Cardiac septum (tissue), 1 donor: ENCODE measurements at regions of chr3 and their contacts with region 1.

Region 1: DNA sequence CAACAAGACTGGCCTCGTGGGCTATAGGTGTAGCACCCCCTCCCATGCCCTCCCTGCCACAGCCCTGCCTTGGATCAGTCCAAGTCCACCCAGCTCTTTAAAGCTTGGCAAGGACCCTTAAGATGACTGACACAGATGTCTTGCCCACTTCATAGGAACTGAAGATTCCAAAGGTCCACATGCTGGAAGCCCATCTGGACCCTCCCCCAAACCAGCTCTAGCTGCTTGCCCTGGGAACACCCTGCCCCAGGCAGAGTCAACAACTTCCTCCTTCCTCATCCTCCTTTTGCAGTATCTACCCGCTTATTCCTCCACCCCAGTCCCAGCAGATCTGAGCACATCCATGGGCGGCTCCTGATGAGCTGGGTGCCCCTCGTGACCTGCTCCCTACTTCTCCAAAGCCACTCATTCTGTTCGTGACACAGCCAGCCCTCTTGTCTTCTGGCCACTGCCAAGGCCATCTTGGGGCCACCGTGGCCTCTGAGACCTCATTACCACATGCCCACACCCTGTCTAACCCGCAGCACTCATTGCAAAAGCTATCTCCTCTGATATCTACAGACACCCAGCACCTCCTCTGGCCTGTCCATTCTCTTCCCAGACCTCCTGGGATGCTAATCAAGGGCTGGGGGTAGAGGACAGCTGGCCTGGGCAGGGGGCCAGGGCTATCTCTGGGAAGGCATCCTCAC is 2.0 kb upstream of the PFKFB4 start:
- DNase-seq: no peak

Region 2: GRCh38 chr3:48232734-48233133 is 325.9 kb before region 1 on chr3:
- intact Hi-C with region 1: no loop called
- DNase-seq: no peak

Region 3: GRCh38 chr3:48601622-48601994 is 43.0 kb after region 1 on chr3:
- intact Hi-C with region 1: loop called (anchors 2 kb)
- DNase-seq: peak; percentile 86

Region 4: DNA sequence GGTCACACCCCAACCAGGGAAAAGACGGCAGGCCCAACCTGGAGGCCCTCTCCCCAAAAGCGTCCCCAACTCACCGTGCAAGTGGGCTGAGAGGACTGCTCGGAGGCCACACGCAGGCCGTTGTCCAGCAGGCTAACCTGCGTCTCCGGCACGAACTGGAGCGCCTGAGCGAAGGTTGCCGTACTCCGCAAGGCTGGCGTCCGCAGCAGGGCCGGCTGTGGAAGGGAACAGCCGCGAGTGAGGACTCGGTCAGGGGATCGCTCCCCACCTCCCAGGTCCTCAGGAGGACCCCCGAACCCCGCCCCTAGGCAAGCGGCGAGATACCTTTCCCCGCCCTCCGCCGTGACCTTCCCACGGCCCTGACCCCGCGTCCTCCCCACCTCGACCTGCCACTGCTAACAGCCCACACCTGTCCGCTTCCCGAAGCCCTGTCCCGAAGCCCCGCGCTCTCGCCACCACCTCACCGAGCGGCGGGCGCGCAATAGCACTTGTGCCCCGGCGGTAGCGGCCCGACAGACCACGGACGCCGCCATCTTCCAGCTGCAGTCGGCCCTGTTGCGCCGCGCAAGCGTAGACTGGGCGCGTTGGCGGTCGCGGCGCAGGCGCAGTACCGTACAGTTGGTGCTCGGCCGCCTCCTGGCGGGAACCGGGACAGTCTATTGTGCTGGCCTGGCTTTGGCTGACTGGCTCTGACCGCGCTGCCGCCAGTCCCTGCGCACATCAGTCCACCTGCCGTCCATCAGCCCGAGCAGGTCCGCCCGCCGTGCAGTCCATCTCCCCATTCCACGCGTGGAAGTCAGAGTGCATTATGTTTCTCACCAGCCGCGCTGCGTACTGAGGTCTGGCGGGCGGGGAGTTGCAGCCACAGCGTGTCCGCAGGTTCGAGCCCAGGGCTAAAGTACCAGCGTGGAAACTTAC is 50.8 kb after region 1 on chr3 and contains the start of gene UQCRC1:
- intact Hi-C with region 1: loop called (anchors 2 kb)
- DNase-seq: peak; percentile 97
- total RNA-seq, gene UQCRC1: 753 TPM